Right ventricle myocardium inferior (tissue), 1 donor: ENCODE measurements at regions of chr22 and their contacts with region 1.

Region 1: DNA sequence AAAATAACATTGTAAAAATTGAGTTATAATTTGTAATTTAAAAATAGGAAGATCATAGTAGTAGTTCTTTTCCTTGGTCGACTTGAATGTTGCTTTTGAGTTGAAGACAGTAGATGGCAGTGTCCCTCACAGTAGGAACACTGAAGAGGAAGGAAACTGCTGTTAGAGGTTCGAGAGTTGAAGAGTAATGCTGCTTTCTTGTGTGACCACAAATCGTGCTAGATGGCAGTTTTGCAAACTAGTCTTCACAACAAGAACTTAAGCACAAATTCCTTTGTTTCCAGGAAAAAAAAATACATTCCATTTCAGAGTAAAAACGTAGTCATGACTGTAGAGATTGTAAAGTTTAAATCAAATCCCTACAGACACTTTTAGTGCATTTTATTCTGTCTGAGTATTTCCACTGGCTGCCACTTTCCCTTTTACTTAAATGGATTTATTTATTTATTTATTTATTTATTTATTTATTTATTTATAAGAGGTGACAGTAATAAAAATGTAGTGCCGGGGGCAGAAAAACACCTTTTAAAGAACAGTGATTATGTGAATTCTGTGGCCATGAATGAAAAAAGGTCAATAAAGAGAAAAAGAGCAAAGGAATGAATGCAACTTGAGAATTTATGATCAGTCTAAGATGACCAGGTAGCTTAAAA is 54.6 kb downstream of the SPECC1L start:
- DNase-seq: no peak
- ATAC-seq: peak; percentile 73

Region 2: DNA sequence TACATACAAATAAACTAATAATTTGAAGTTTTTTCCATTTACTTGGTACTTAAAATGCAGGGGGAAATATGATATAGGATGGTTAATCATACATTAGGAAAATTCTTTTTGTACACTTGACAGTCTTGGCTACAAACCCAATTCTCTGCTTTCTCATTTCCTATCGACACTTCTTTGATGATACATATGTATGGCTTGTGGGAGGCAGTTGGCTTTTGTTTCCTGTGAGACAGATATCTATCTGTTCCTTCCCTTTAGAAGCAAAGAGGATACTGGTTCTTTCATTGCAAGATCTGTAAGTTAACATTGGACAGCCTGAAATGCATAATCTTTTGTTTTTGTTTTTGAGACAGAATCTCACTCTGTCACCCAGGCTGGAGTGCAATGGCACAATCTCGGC is 54.3 kb after region 1 on chr22:
- intact Hi-C with region 1: no loop called
- DNase-seq: no peak
- ATAC-seq: no peak

Region 3: GRCh38 chr22:24423519-24424000 is 98.3 kb after region 1 on chr22:
- intact Hi-C with region 1: loop called (anchors 5 kb)
- DNase-seq: peak; percentile 90
- ATAC-seq: peak; percentile 65